ENCODE measurements at regions of chr1 and their contacts with region 1.

Region 1: DNA sequence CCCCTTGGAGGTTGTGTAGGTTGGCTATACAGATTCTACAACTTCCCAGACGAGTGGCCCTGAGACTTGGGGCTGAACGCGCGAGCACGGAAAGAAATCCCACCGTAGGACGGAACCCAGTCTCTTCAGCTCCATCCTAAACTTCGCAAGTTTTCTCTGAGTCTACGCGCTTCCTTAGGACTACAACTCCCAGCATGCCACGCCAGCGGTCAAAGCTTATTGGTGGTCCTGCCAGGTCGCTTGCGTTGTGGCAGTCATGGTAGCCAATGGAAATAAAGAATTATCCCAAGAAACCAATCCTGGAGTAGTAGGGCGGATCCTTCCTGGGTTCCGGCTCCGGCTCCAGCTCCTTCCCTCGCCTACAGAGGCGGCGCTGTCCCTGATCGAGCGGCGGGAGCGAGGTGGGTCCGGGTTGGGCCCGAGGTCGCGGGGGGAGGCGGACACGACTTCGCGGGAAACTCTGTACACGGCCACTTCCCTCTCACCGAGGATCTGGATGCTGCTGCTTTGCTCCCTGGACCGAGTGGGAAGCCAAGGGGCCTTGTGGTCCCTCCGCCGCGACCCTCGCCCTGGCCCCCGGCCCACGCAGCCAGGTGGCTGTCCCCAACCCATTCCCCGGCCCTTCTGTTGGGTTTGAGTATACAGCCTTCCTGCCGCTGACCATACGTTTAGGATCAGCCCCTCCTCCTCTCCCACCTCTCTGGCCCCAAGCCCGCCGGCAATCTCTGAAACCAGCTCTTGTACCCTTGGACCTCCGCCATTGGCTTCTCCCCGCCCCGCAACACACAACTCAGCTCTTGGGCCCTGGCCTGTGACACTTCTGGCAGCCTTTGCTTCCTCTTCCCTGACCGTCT is at the start of gene ZNF691:
- DNase-seq: peak; percentile 94
- H3K4me3 Mint-ChIP-seq: peak within 1 kb of the TSS; percentile 89
- H3K27ac Mint-ChIP-seq: peak within 1 kb of the TSS; percentile 72
- H3K4me1 Mint-ChIP-seq: peaks cover 44% of the 10 kb centered on the region
- H3K27me3 Mint-ChIP-seq: no peaks in the 10 kb centered on the region
- total RNA-seq, gene ZNF691: 8.6 to 9.5 TPM

Region 2: DNA sequence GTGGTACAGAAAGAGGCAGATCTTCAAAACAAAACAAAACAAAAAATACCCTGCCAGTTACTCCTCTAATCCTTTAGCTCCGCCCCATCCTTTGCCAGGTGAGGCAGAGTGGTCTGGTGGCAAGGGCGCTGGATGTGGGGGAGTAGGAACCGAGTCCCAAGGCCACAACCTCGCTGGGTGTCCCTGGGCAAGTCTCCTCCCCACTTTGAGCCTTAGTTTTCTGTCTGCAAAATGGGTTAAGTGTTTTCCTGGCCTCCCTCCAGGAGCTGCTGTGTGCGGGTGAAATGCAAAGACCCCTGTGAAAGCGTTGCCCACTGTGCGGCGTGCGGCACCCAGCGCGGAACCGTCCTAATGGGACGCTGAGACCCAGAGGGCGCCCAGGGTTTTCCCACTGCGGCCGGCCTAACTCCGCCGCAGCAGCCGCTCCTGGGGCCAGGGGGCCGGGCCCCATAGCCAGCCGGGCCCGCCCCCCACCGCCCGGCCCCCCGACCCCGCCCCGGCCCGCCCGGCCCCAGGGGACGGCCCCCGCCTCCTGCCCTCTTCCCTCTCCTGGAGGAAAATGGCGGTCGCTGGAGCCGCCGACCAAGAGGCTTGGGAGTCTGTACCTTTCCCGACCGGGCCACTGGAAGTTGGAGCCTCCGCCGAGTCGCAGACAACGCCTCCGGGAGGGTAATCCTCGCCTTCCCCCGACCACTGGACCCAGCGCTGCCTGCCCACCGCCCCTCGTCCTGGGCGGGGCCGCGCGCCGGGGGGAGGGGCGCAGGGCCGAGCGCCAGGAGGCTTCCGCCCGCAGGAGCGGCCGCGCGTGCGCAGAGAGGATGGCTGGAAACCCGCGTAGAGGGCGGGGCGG is 29.7 kb before region 1 on chr1 and contains the starts of genes ERMAP and SVBP:
- CTCF ChIA-PET with region 1: interaction called, 23 read pairs
- POLR2A ChIA-PET with region 1: interaction called, 5 read pairs
- intact Hi-C with region 1: loop called (anchors 1 kb)
- DNase-seq: peak; percentile 96
- H3K4me3 Mint-ChIP-seq: peak within 1 kb of the TSS; percentile 76
- H3K27ac Mint-ChIP-seq: peak within 1 kb of the TSS; percentile 75
- H3K4me1 Mint-ChIP-seq: peaks cover 17% of the 10 kb centered on the region
- H3K27me3 Mint-ChIP-seq: no peaks in the 10 kb centered on the region
- total RNA-seq, gene ERMAP: 3.4 to 4.5 TPM
- total RNA-seq, gene SVBP: 16.8 to 18.8 TPM

Measured in activated CD4-positive, alpha-beta memory T cell treated with anti-CD3 and anti-CD28 coated beads for 36 hours (primary cell).